AG04449 (cell line): ENCODE measurements at regions of chr3 and their contacts with region 1.

Region 1: GRCh38 chr3:119891944-119892721 is 110.2 kb downstream of the NR1I2 start:
- DNase-seq: no peak
- H3K4me3 ChIP-seq: no peak overlapping the region
- CTCF ChIP-seq: peak; percentile 55

Region 2: DNA sequence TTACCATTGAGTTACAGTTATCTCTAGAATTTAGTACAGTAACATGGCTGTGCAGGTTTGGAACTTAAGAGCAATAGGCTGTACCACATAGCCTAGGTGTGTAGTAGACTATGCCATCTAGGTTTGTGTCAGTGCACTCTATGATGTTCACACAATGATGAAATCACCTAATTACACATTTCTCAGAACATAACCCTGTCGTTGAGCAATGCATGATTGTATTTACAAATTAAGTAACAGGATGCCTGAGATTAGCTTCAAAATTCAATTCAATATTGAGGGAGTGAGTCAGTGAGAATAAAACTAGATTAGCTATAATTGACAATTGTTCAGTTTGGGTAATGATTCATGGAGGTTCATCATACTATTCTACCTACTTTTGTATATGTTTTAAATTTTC is 1491.2 kb before region 1 on chr3:
- CTCF ChIA-PET with region 1: no interaction called
- POLR2A ChIA-PET with region 1: no interaction called
- DNase-seq: no peak
- H3K4me3 ChIP-seq: no peak overlapping the region
- CTCF ChIP-seq: no peak

Region 3: DNA sequence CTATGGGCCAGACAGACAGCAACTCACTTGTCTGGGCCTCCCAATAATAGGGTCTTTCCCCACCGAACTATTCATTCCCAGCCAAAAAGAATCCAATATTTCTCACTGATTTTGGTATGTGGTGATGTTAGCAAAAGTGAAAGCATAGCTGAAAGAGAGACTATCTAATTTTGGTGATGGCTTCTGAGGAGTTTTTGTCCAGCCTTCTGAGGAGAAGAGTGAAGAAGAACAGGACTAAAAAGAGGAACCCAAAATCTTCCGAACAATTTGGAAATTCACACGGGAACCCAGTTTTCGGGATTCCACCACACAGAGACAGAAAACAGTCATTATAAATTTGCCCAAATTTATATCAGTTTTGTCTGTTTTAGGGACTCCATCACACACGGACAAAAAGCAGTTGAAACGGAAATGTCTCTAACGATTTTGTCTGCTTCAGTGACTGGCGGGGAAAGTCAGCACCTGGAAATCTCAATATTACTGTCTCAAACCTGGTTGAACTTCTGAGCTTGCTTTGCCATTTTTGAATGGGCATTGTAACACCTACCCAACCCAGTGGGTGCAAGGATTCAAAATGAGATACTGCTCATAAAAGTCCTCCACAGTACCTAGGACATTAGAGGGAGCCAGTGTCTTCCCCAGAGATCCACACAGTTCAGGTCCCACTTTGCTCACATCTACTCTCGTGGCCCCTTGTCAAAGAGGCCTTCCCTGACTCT is 341.8 kb before region 1 on chr3:
- CTCF ChIA-PET with region 1: no interaction called
- POLR2A ChIA-PET with region 1: no interaction called
- DNase-seq: no peak
- H3K4me3 ChIP-seq: no peak overlapping the region
- CTCF ChIP-seq: no peak

Region 4: GRCh38 chr3:119702530-119703157 is 189.5 kb before region 1 on chr3 and contains the start of gene CFAP91:
- CTCF ChIA-PET with region 1: no interaction called
- POLR2A ChIA-PET with region 1: no interaction called
- DNase-seq: peak; percentile 46
- H3K4me3 ChIP-seq: peak within 1 kb of the TSS; percentile 63
- CTCF ChIP-seq: no peak

Region 5: DNA sequence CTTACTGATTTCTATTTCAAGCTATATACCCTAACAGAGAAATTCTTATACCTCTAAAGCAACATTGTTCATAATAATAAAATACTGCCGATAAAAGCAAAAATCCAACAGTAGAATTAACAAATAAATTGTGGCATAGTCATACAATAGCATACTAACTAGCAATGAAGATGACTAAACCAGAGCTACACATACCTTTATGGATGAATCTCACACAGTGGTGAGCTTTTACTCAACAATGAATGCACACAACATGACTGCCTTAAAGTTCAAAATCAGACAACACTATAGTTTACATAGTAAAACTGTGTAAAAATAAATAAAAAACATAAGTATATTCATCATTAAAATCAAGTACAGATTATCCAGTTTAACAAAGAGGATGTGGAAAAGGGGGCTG is 11.2 kb before region 1 on chr3:
- CTCF ChIA-PET with region 1: interaction called, 22 read pairs
- POLR2A ChIA-PET with region 1: no interaction called
- DNase-seq: no peak
- H3K4me3 ChIP-seq: no peak overlapping the region
- CTCF ChIP-seq: no peak

Region 6: DNA sequence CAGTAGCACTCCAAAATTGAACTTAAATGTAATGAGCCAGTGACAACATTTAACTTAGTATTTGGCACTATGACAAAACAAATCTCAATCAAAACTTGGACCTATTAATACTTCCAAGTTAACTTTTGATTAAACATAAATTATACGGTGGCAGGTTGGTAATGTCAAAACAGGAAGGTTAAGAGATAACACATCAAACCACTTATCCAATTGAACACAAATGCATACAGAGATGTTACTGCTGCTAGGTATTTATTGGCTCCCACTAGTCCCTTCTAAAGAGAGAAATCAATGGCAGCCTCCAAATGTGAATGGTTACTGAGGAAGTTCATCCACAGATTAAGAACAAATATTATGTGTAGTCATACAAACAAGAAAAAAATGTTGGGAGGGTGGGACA is 200.3 kb after region 1 on chr3:
- CTCF ChIA-PET with region 1: interaction called, 15 read pairs
- POLR2A ChIA-PET with region 1: interaction called, 3 read pairs
- DNase-seq: no peak
- H3K4me3 ChIP-seq: peak overlapping the region; percentile 75
- CTCF ChIP-seq: no peak

Region 7: DNA sequence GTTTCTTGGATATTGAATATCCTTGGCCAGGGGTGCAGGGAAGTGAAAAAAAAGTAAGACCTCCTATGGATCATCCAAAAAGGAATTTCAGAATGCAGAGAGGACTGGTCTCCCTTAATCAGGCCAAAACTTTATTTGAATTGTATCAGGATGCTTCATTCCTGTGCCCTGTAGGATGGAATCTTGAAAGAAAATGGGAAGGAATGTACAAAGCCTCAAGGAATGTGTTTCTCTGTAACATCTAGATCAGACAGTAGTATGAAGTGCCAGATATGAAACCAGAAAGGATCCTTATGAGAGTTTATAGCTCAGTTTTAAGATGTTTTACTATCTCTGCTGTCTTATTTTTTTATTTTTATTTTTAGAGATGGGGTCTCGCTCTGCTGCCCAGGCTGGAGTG is 208.6 kb after region 1 on chr3:
- CTCF ChIA-PET with region 1: interaction called, 10 read pairs
- POLR2A ChIA-PET with region 1: no interaction called
- DNase-seq: peak; percentile 36
- H3K4me3 ChIP-seq: no peak overlapping the region
- CTCF ChIP-seq: no peak

Region 8: GRCh38 chr3:120182724-120183524 is 290.8 kb after region 1 on chr3:
- CTCF ChIA-PET with region 1: interaction called, 41 read pairs
- POLR2A ChIA-PET with region 1: no interaction called
- DNase-seq: no peak
- H3K4me3 ChIP-seq: no peak overlapping the region
- CTCF ChIP-seq: peak; percentile 34

Region 9: DNA sequence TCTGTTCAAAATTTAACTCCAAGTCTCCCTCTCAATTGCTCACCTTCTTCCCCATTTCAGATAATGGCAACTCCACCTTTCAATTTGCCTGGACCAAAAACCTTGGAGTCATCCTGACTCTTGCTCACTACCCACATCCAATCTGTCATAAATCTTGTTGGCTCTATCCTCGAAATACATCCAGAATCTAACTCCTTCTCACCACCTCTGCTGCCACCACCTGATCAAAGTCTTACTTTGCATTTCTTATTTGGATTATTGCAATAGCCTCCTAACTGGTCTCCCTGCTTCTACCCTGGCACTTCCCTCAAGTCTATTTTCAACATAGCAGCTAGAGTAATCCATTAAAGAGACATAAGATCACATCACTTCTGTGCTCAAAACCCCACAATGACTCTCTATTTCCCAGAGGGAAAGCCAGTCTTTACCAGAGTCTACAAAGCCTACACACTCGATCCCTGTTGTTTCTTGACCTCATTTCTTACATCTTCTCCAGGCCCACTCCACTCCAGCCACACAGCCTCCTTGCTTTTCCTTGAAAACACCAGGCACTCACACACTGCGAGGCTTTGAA is 306.3 kb after region 1 on chr3:
- CTCF ChIA-PET with region 1: interaction called, 12 read pairs
- POLR2A ChIA-PET with region 1: no interaction called
- DNase-seq: no peak
- H3K4me3 ChIP-seq: no peak overlapping the region
- CTCF ChIP-seq: no peak